Naive thymus-derived CD4-positive, alpha-beta T cell (primary cell): ENCODE measurements at regions of chr2 and their contacts with region 1.

Region 1: GRCh38 chr2:24409700-24410556 is 49.6 kb upstream of the ITSN2 start:
- DNase-seq: peak in 7 of 9 donors; percentile 19 to 59 (median 51)
- ATAC-seq: peak; percentile 79
- H3K4me3 ChIP-seq: no peak overlapping the region
- H3K4me3 Mint-ChIP-seq: no peak overlapping the region
- H3K27ac ChIP-seq: no peak overlapping the region
- H3K27ac Mint-ChIP-seq: no peak overlapping the region
- H3K4me1 ChIP-seq: no peaks in the 10 kb centered on the region
- H3K4me1 Mint-ChIP-seq: no peaks in the 10 kb centered on the region
- H3K27me3 ChIP-seq: no peaks in the 10 kb centered on the region
- H3K27me3 Mint-ChIP-seq: peaks cover 2 to 19% (median 6%) of the 10 kb centered on the region in 5 donors

Region 2: DNA sequence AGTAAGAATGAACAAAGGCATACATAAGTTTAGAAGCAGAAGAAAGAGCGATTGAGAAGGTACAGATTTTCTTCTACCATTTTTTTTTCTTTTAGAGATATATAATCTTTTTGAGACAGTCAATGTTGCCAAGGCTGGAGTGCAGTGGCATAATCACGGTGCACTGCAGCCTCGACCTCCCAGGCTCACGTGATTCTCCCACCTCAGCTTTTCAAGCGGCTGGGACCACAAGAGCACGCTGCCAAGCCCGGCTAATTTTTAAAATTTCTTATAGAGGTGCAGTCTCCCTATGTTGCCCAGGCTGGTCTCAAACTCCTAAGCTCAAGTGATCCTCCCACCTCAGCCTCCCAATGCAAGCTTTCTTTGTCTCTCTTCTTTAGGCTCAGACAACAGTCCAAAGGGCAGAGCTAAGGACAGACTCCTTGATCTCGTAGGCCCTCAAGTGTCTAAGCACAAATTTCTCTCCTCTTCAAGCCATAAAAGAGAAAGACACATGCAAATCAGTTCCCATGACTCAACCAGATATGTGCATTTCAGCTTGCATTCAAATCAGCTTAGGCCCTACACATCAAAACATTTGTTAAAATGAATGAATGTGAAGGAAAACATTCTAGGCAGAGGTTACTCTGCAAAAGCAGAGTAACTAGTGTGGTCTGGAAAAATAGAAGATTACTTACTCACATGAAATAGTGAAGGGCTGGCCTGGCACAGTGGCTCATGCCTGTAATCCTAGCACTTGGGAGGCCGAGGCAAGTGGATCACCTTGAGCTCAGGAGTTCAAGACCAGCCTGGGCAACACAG is 67.6 kb before region 1 on chr2:
- CTCF ChIA-PET with region 1: no interaction called
- POLR2A ChIA-PET with region 1: no interaction called
- intact Hi-C with region 1: no loop called
- DNase-seq: no peak
- ATAC-seq: no peak
- H3K4me3 ChIP-seq: no peak overlapping the region
- H3K4me3 Mint-ChIP-seq: peak overlapping the region in 4 of 10 donors; percentile 11 to 56 (median 38)
- H3K27ac ChIP-seq: no peak overlapping the region
- H3K27ac Mint-ChIP-seq: peak overlapping the region in 5 of 9 donors; percentile 1 to 70 (median 32)
- H3K4me1 ChIP-seq: peaks cover 11 to 19% of the 10 kb centered on the region in 2 donors
- H3K4me1 Mint-ChIP-seq: peaks cover 26 to 91% (median 83%) of the 10 kb centered on the region in 7 donors
- H3K27me3 ChIP-seq: no peaks in the 10 kb centered on the region
- H3K27me3 Mint-ChIP-seq: no peaks in the 10 kb centered on the region

Region 3: DNA sequence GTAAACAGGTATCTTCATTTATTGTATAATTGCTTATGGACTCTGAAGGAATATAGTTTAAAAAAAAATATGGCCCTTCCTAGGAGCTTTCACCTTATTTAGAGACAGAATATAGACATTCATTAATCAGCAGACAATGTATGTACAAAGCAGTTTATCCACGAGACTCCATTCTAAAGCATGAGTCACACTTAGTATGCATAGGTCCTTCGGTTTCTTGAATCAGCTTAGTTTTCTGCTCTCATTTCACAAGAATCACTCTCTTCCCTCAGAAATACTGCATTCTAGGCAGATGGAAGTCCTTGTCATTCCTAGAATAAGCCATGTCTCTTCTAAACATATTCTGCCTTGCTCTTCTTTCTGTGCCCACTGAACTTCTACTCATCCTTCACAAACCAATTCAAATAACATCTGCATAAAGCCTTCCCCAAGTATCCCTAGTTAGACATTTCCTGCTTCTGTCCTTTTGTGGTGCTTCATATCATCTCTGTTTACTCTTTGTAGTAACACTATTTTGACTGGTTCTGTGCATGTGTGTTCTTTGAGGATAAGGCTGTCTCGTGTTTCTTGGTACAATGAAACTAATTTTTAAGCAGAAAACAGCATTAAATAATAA is 298.7 kb after region 1 on chr2:
- CTCF ChIA-PET with region 1: no interaction called
- POLR2A ChIA-PET with region 1: no interaction called
- intact Hi-C with region 1: loop called in 1 of 2 experiments (anchors 5 kb)
- DNase-seq: no peak
- ATAC-seq: no peak
- H3K4me3 ChIP-seq: no peak overlapping the region
- H3K4me3 Mint-ChIP-seq: no peak overlapping the region
- H3K27ac ChIP-seq: no peak overlapping the region
- H3K27ac Mint-ChIP-seq: no peak overlapping the region
- H3K4me1 ChIP-seq: no peaks in the 10 kb centered on the region
- H3K4me1 Mint-ChIP-seq: peaks cover 0 to 2% (median 0%) of the 10 kb centered on the region in 7 donors
- H3K27me3 ChIP-seq: no peaks in the 10 kb centered on the region
- H3K27me3 Mint-ChIP-seq: no peaks in the 10 kb centered on the region

Region 4: DNA sequence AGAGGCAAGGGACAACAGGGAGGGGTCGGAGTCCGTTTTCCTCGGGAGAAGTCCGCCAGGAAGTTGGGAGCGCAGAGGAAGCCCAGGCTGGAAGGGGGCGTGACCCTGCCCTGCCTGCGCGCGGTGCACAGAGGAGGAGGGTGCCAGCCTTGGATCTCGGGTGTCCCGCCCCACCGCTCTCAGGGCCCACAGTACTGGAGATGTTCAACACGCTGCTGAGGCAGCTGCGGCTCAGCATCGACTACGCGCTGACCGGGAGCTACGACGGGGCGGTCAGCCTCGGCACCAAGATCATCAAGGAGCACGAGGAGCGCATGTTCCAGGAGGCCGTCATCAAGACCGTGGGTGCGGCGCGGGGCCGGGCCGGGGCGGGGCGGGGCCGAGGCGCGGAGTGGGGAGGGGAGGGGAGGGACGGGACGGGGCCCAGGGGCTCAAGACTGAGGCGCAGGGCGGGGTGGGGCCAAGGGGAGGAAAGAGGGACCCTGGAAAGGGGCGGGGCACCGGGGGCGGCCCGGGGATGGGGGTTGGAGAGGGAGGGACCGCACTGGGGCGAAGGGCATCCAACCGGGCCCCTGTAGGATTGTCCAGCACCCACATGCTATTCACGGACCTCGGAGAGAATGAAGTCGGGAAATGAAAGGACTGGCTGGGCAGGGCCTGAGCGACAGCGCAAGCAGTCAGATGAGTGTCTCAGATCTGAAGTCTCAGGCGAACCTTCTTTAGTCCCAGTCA is 721.8 kb after region 1 on chr2:
- CTCF ChIA-PET with region 1: interaction called, 26 read pairs
- POLR2A ChIA-PET with region 1: no interaction called
- intact Hi-C with region 1: loop called (anchors 1 kb)
- DNase-seq: peak in 1 of 9 donors; percentile 32
- ATAC-seq: peak; percentile 44
- H3K4me3 ChIP-seq: no peak overlapping the region
- H3K4me3 Mint-ChIP-seq: peak overlapping the region; percentile 20 to 82 (median 74)
- H3K27ac ChIP-seq: no peak overlapping the region
- H3K27ac Mint-ChIP-seq: peak overlapping the region in 1 of 9 donors; percentile 62
- H3K4me1 ChIP-seq: peaks cover 0 to 6% of the 10 kb centered on the region in 2 donors
- H3K4me1 Mint-ChIP-seq: peaks cover 6 to 16% (median 12%) of the 10 kb centered on the region in 7 donors
- H3K27me3 ChIP-seq: peaks cover 0 to 17% of the 10 kb centered on the region in 2 donors
- H3K27me3 Mint-ChIP-seq: peaks cover 52 to 65% (median 58%) of the 10 kb centered on the region in 5 donors